GM10248 (cell line): ENCODE measurements at regions of chr14 and their contacts with region 1.

Region 1: GRCh38 chr14:53325176-53325806 is 172.2 kb upstream of the DDHD1 start:
- DNase-seq: no peak
- CTCF ChIP-seq: peak; percentile 47

Region 2: DNA sequence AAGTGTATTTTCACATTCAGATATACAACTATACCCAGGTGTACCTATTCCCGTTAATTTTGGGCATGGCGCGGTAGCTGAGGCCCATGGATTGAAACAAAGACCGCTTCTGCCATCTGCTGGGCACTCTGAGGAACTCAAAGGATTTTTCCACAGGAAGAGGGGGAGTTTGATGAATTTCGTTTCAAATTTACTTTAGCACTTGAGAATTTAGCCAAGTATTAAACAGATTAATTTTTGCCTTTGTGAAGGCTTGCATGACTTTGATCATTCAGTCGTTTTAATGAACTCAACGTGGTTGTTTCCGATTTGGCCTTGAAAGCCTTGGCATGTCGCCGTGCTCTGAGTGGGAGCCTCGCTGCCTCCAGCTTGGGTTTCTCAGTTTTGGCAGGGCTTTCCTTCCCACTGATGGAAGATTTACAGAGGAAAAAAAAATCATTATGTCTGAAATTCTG is 19.0 kb before region 1 on chr14:
- CTCF ChIA-PET with region 1: interaction called, 25 read pairs
- POLR2A ChIA-PET with region 1: no interaction called
- DNase-seq: peak; percentile 38
- CTCF ChIP-seq: peak; percentile 55

Region 3: GRCh38 chr14:53338192-53338591 is 12.9 kb after region 1 on chr14:
- CTCF ChIA-PET with region 1: interaction called, 12 read pairs
- POLR2A ChIA-PET with region 1: no interaction called
- DNase-seq: no peak
- CTCF ChIP-seq: no peak